Activated CD4-positive, alpha-beta T cell treated with anti-CD3 and anti-CD28 coated beads for 36 hours (primary cell): ENCODE measurements at regions of chr3 and their contacts with region 1.

Region 1: DNA sequence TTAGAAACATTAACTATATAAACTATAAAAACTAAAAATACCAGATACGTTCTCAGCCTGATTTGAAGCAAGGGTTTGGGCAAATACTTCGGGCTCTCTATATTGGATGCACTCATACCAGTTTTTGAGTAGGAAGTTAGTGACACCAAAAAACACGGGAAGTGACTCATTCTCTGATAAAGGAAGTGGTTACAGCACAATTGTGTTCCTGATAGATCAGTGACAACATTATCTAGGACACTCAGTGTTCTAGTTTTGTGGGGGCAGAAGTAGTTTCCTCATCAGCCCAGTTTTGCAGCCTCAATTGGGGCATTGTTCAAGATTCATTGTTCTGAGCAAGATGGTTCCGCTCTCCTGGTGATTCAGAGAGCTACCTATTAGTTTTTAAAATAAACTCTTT is 469.6 kb upstream of the DPPA4 start:
- DNase-seq: peak; percentile 37
- ATAC-seq: peak; percentile 88
- H3K4me3 Mint-ChIP-seq: peak overlapping the region; percentile 23
- H3K27ac Mint-ChIP-seq: peak overlapping the region; percentile 69
- H3K4me1 Mint-ChIP-seq: peaks cover 37% of the 10 kb centered on the region
- H3K27me3 Mint-ChIP-seq: peaks cover 2% of the 10 kb centered on the region

Region 2: GRCh38 chr3:109618766-109619378 is 188.1 kb before region 1 on chr3:
- CTCF ChIA-PET with region 1: no interaction called
- POLR2A ChIA-PET with region 1: no interaction called
- intact Hi-C with region 1: no loop called
- DNase-seq: no peak
- ATAC-seq: no peak
- H3K4me3 Mint-ChIP-seq: no peak overlapping the region
- H3K27ac Mint-ChIP-seq: no peak overlapping the region
- H3K4me1 Mint-ChIP-seq: no peaks in the 10 kb centered on the region
- H3K27me3 Mint-ChIP-seq: peaks cover 1% of the 10 kb centered on the region

Region 3: DNA sequence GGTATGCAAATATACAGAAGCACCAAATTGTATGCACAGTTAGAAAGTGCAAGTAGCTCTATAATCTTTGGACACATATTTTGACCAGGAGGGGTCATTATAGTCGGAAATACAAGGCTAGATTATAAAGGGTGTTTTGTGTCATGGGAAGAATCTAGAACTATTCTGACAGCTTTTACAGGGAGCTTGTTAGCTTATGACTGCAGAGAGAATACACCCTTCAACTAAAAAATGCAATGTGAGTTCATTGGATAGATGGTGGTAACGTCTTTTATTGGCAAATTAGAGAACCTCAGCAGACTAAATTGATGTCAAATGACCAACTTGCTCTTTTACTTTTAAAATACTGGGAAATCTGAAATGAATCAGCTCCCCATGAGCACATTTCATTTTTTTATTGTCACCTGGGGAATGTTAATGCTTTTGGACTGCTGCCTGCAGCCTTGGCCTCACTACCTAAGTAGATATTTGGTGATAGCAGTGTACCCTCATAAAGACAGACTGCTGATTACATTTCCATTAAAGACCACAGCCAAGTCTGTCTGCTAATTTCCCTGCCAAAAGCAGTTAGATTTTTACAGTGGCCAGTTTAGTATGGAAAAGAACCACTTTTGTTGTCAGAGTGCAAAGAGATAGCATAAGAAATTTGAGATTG is 46.3 kb after region 1 on chr3:
- CTCF ChIA-PET with region 1: no interaction called
- POLR2A ChIA-PET with region 1: no interaction called
- intact Hi-C with region 1: loop called (anchors 1 to 2 kb)
- DNase-seq: no peak
- ATAC-seq: no peak
- H3K4me3 Mint-ChIP-seq: no peak overlapping the region
- H3K27ac Mint-ChIP-seq: no peak overlapping the region
- H3K4me1 Mint-ChIP-seq: peaks cover 7% of the 10 kb centered on the region
- H3K27me3 Mint-ChIP-seq: no peaks in the 10 kb centered on the region

Region 4: DNA sequence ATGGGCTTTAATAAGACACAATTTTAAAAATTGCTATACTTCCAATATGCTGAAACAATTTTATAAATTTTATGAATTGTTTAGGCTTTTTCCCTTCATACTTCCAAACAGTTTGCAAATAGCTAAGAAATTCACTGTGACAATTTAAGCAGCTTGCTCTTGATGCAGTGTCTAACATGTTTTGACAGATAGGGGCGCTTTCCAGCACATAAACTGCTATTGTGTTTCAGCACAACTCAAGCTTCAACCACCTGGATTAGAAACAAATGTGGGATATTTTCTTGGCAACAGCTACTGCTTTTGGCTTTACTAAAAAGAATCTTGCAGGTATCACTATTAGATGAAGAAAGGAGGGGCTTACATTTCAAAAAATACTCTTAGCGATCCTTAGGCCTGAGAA is 96.2 kb after region 1 on chr3:
- CTCF ChIA-PET with region 1: no interaction called
- POLR2A ChIA-PET with region 1: no interaction called
- intact Hi-C with region 1: no loop called
- DNase-seq: no peak
- ATAC-seq: no peak
- H3K4me3 Mint-ChIP-seq: no peak overlapping the region
- H3K27ac Mint-ChIP-seq: no peak overlapping the region
- H3K4me1 Mint-ChIP-seq: peaks cover 21% of the 10 kb centered on the region
- H3K27me3 Mint-ChIP-seq: no peaks in the 10 kb centered on the region

Region 5: DNA sequence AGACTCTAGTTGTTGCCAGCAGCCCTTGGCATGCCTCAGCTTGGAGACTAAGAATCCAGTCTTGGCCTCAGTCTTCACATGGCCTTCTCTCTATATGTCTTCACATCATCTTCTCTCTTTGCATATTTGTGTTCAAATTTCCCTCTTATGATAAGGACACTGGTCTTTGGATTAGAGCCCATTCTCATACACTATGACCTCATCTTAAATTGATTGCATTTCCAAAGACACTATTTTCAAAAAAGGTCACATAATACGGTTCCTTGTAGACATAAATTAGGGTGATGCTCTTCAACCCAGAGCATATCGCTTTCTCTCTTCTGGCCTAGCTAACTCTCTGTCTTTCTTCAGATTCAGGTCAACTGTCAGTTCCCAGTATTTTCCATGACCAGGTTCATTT is 303.7 kb after region 1 on chr3:
- CTCF ChIA-PET with region 1: no interaction called
- POLR2A ChIA-PET with region 1: no interaction called
- intact Hi-C with region 1: no loop called
- DNase-seq: no peak
- ATAC-seq: no peak
- H3K4me3 Mint-ChIP-seq: no peak overlapping the region
- H3K27ac Mint-ChIP-seq: no peak overlapping the region
- H3K4me1 Mint-ChIP-seq: no peaks in the 10 kb centered on the region
- H3K27me3 Mint-ChIP-seq: peaks cover 2% of the 10 kb centered on the region

Region 6: GRCh38 chr3:110814170-110815007 is 1007.5 kb after region 1 on chr3:
- CTCF ChIA-PET with region 1: no interaction called
- POLR2A ChIA-PET with region 1: no interaction called
- intact Hi-C with region 1: loop called in 1 of 2 experiments (anchors 10 kb)
- DNase-seq: peak; percentile 70
- ATAC-seq: peak; percentile 79
- H3K4me3 Mint-ChIP-seq: no peak overlapping the region
- H3K27ac Mint-ChIP-seq: peak overlapping the region; percentile 67
- H3K4me1 Mint-ChIP-seq: peaks cover 10% of the 10 kb centered on the region
- H3K27me3 Mint-ChIP-seq: peaks cover 23% of the 10 kb centered on the region

Region 7: GRCh38 chr3:111238885-111239284 is 1432.0 kb after region 1 on chr3:
- CTCF ChIA-PET with region 1: no interaction called
- POLR2A ChIA-PET with region 1: no interaction called
- intact Hi-C with region 1: loop called in 1 of 2 experiments (anchors 10 kb)
- DNase-seq: no peak
- ATAC-seq: peak; percentile 94
- H3K4me3 Mint-ChIP-seq: no peak overlapping the region
- H3K27ac Mint-ChIP-seq: no peak overlapping the region
- H3K4me1 Mint-ChIP-seq: peaks cover 15% of the 10 kb centered on the region
- H3K27me3 Mint-ChIP-seq: no peaks in the 10 kb centered on the region

Region 8: GRCh38 chr3:111604119-111604518 is 1797.2 kb after region 1 on chr3:
- CTCF ChIA-PET with region 1: no interaction called
- POLR2A ChIA-PET with region 1: no interaction called
- intact Hi-C with region 1: loop called in 1 of 2 experiments (anchors 5 kb)
- DNase-seq: peak; percentile 67
- ATAC-seq: peak; percentile 64
- H3K4me3 Mint-ChIP-seq: peak overlapping the region; percentile 44
- H3K27ac Mint-ChIP-seq: peak overlapping the region; percentile 97
- H3K4me1 Mint-ChIP-seq: peaks cover 88% of the 10 kb centered on the region
- H3K27me3 Mint-ChIP-seq: no peaks in the 10 kb centered on the region